Naive thymus-derived CD4-positive, alpha-beta T cell (primary cell): ENCODE measurements at regions of chr21 and their contacts with region 1.

Region 1: GRCh38 chr21:45266518-45267389 is 20.9 kb downstream of the POFUT2 start:
- DNase-seq: peak in 7 of 9 donors; percentile 32 to 58 (median 50)
- ATAC-seq: peak; percentile 88
- H3K4me3 ChIP-seq: no peak overlapping the region
- H3K4me3 Mint-ChIP-seq: peak overlapping the region; percentile 3 to 72 (median 52)
- H3K27ac ChIP-seq: peak overlapping the region; percentile 50
- H3K27ac Mint-ChIP-seq: peak overlapping the region; percentile 77 to 91 (median 84)
- H3K4me1 ChIP-seq: peaks cover 17 to 19% of the 10 kb centered on the region in 2 donors
- H3K4me1 Mint-ChIP-seq: peaks cover 13 to 23% (median 20%) of the 10 kb centered on the region in 7 donors
- H3K27me3 ChIP-seq: no peaks in the 10 kb centered on the region
- H3K27me3 Mint-ChIP-seq: no peaks in the 10 kb centered on the region

Region 2: GRCh38 chr21:45228171-45228641 is 38.5 kb before region 1 on chr21:
- CTCF ChIA-PET with region 1: interaction called, 3 read pairs
- POLR2A ChIA-PET with region 1: no interaction called
- intact Hi-C with region 1: loop called in 1 of 2 experiments (anchors 5 kb)
- DNase-seq: peak in 1 of 9 donors; percentile 65
- ATAC-seq: peak; percentile 70
- H3K4me3 ChIP-seq: no peak overlapping the region
- H3K4me3 Mint-ChIP-seq: peak overlapping the region in 1 of 10 donors; percentile 53
- H3K27ac ChIP-seq: no peak overlapping the region
- H3K27ac Mint-ChIP-seq: peak overlapping the region in 4 of 9 donors; percentile 11 to 70 (median 42)
- H3K4me1 ChIP-seq: peaks cover 0 to 44% of the 10 kb centered on the region in 2 donors
- H3K4me1 Mint-ChIP-seq: peaks cover 7 to 49% (median 26%) of the 10 kb centered on the region in 7 donors
- H3K27me3 ChIP-seq: no peaks in the 10 kb centered on the region
- H3K27me3 Mint-ChIP-seq: peaks cover 0 to 12% (median 0%) of the 10 kb centered on the region in 5 donors

Region 3: GRCh38 chr21:45281411-45282282 is 14.9 kb after region 1 on chr21:
- CTCF ChIA-PET with region 1: no interaction called
- POLR2A ChIA-PET with region 1: no interaction called
- intact Hi-C with region 1: no loop called
- DNase-seq: no peak
- ATAC-seq: no peak
- H3K4me3 ChIP-seq: no peak overlapping the region
- H3K4me3 Mint-ChIP-seq: no peak overlapping the region
- H3K27ac ChIP-seq: no peak overlapping the region
- H3K27ac Mint-ChIP-seq: no peak overlapping the region
- H3K4me1 ChIP-seq: peaks cover 0 to 4% of the 10 kb centered on the region in 2 donors
- H3K4me1 Mint-ChIP-seq: peaks cover 6 to 21% (median 17%) of the 10 kb centered on the region in 7 donors
- H3K27me3 ChIP-seq: no peaks in the 10 kb centered on the region
- H3K27me3 Mint-ChIP-seq: no peaks in the 10 kb centered on the region

Region 4: GRCh38 chr21:45788637-45789506 is 522.1 kb after region 1 on chr21:
- CTCF ChIA-PET with region 1: no interaction called
- POLR2A ChIA-PET with region 1: no interaction called
- intact Hi-C with region 1: no loop called
- DNase-seq: no peak
- ATAC-seq: no peak
- H3K4me3 ChIP-seq: no peak overlapping the region
- H3K4me3 Mint-ChIP-seq: no peak overlapping the region
- H3K27ac ChIP-seq: no peak overlapping the region
- H3K27ac Mint-ChIP-seq: peak overlapping the region in 1 of 9 donors; percentile 10
- H3K4me1 ChIP-seq: no peaks in the 10 kb centered on the region
- H3K4me1 Mint-ChIP-seq: peaks cover 0 to 11% (median 0%) of the 10 kb centered on the region in 7 donors
- H3K27me3 ChIP-seq: no peaks in the 10 kb centered on the region
- H3K27me3 Mint-ChIP-seq: no peaks in the 10 kb centered on the region